ENCODE measurements at regions of chr14 and their contacts with region 1.

Region 1: GRCh38 chr14:89040460-89041259 is 216.2 kb downstream of the TTC8 start:
- DNase-seq: peak; percentile 85 to 93 (median 90)
- ATAC-seq: peak; percentile 90 to 98 (median 96)
- H3K4me3 ChIP-seq: peak overlapping the region; percentile 5 to 63 (median 50)
- H3K27ac ChIP-seq: peak overlapping the region; percentile 51 to 88 (median 72)
- H3K4me1 ChIP-seq: peaks cover 0 to 17% (median 8%) of the 10 kb centered on the region in 12 donors
- H3K27me3 ChIP-seq: no peaks in the 10 kb centered on the region
- CTCF ChIP-seq: peak; percentile 91 to 98 (median 96)
- POLR2A ChIP-seq: no peak

Region 2: DNA sequence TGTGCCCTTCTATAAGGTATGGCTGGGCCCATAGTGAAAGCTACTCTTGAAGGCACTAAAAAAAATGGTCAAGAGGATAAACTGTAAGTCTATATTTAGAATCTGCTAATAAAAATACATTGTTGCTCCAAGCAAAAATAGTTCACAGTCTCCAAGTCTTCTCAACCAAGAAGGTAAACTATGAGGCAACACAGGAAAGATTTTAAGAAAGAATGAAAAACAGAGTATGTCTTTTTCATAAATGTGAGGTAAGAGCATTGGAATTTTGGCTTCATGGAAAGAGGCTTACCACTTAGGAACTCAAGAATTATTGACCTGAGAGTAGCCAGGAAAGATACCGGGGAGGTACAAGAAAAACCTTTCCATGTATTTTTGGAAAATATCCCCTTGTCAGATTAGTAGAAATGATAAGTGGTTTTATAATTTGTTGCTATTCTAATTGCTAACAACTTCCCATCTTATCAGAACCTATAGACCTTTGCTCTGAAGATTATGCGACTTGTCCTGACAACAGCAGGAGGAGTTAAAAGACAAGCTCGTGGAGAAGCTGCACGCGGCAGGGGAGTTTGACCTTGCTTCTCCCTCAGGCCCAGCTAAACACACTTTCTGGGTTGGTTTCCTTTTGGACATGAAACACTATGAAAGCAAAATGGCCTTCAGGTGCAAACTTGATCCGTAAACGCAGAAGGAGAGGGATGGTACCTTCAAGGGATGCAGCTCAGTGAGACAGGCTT is 138.3 kb after region 1 on chr14:
- intact Hi-C with region 1: loop called in 3 of 10 experiments (anchors 5 to 10 kb)
- DNase-seq: no peak
- ATAC-seq: no peak
- H3K4me3 ChIP-seq: no peak overlapping the region
- H3K27ac ChIP-seq: peak overlapping the region in 2 of 12 donors; percentile 19 to 38
- H3K4me1 ChIP-seq: peaks cover 0 to 43% (median 27%) of the 10 kb centered on the region in 12 donors
- H3K27me3 ChIP-seq: no peaks in the 10 kb centered on the region
- CTCF ChIP-seq: no peak
- POLR2A ChIP-seq: no peak

Region 3: GRCh38 chr14:89237921-89238529 is 197.4 kb after region 1 on chr14:
- intact Hi-C with region 1: loop called in 1 of 10 experiments (anchors 10 kb)
- DNase-seq: no peak
- ATAC-seq: peak in 1 of 4 donors; percentile 14
- H3K4me3 ChIP-seq: no peak overlapping the region
- H3K27ac ChIP-seq: no peak overlapping the region
- H3K4me1 ChIP-seq: peaks cover 2 to 53% (median 23%) of the 10 kb centered on the region in 12 donors
- H3K27me3 ChIP-seq: no peaks in the 10 kb centered on the region
- CTCF ChIP-seq: peak in 11 of 12 donors; percentile 7 to 53 (median 26)
- POLR2A ChIP-seq: no peak

Region 4: GRCh38 chr14:89416002-89416995 is 375.6 kb after region 1 on chr14:
- intact Hi-C with region 1: loop called in 8 of 10 experiments (anchors 2 to 10 kb)
- DNase-seq: peak; percentile 97 to 100 (median 99)
- ATAC-seq: peak; percentile 85 to 92 (median 88)
- H3K4me3 ChIP-seq: peak overlapping the region; percentile 66 to 98 (median 94)
- H3K27ac ChIP-seq: peak overlapping the region; percentile 80 to 99 (median 94)
- H3K4me1 ChIP-seq: peaks cover 0 to 44% (median 30%) of the 10 kb centered on the region in 12 donors
- H3K27me3 ChIP-seq: no peaks in the 10 kb centered on the region
- CTCF ChIP-seq: no peak
- POLR2A ChIP-seq: peak in 1 of 2 donors; percentile 56

Region 5: DNA sequence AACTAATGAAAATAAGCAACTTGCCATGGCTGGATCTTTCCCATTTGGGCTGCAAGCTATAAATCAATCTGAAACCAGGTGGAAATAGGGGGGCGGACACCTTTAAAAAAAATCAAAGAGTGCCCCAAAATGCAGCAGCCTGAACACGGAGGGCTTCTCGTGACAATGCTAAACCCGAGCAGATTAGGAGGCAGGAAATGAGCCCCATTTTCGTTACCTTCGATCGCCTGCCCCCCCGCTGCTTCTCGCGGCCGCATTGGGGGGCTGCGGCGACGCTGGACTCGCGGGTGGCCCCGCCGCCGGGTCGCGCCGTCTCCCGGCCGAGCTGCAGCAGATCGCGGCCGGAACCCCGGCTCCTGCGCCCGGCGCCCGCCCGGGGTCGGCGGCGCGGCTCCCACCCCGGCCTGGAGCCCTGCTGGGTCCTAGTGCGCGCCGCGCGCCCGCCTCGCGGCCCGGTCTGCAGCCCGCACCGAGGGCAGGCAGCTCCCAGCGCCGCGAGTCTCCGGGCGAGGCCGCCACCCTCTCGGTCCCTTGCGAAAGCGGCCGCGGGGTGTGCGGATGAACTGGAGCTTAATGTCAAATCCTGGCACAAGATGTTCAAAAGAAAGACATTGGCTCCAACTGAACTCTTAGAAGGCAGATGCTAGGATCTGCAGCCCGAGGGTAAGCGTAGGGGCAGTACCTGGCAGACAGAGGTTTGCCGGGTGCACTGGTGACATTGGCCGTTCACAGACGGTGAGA is 578.3 kb after region 1 on chr14:
- intact Hi-C with region 1: loop called in 3 of 10 experiments (anchors 5 kb)
- DNase-seq: peak; percentile 72 to 90 (median 78)
- ATAC-seq: peak; percentile 81 to 97 (median 89)
- H3K4me3 ChIP-seq: peak overlapping the region; percentile 55 to 91 (median 80)
- H3K27ac ChIP-seq: peak overlapping the region; percentile 52 to 87 (median 82)
- H3K4me1 ChIP-seq: peaks cover 0 to 62% (median 33%) of the 10 kb centered on the region in 12 donors
- H3K27me3 ChIP-seq: no peaks in the 10 kb centered on the region
- CTCF ChIP-seq: peak in 2 of 12 donors; percentile 11 to 16
- POLR2A ChIP-seq: peak in 1 of 2 donors; percentile 51

Region 6: GRCh38 chr14:89767861-89768268 is 727.2 kb after region 1 on chr14:
- intact Hi-C with region 1: loop called in 9 of 10 experiments (anchors 2 to 10 kb)
- DNase-seq: peak in 1 of 5 donors; percentile 20
- ATAC-seq: peak; percentile 61 to 71 (median 62)
- H3K4me3 ChIP-seq: no peak overlapping the region
- H3K27ac ChIP-seq: no peak overlapping the region
- H3K4me1 ChIP-seq: peaks cover 0 to 11% (median 0%) of the 10 kb centered on the region in 12 donors
- H3K27me3 ChIP-seq: no peaks in the 10 kb centered on the region
- CTCF ChIP-seq: peak; percentile 47 to 71 (median 60)
- POLR2A ChIP-seq: no peak

Region 7: DNA sequence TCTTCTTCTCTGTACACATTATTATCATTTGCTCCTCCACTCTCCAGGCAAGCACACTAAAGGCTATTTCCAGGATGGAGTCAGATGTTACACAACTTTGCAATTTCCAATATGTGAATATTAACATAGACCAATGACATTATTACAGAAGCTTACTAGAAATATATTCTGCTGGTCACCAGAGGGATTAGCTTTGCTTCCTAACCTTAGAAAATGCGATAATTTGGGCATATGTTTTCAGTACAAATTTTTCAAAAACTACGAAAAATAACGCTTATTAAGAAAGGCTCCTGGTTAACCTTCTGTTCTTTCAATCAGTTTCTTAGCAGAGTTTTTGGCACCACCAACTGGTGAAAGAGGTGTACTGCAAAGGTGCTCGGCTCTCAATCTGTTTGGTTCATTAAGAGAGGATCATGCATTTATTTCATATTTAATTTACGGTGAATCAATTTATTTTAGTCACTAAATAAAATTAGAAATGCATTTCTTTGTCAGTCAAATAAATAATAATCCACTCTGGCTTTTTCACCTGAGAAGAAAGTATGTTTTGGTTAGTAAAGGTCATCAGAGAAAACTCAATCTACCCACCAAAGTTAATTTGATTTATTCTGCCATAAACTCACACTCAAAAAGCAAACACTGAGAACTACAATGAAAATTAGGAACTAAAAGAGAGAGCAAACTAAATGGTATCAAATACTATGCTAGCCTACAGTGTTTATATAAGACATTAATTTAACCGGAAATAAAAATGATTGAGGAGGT is 874.6 kb after region 1 on chr14:
- intact Hi-C with region 1: loop called in 9 of 10 experiments (anchors 1 to 5 kb)
- DNase-seq: peak in 3 of 5 donors; percentile 33 to 50 (median 47)
- ATAC-seq: peak in 2 of 4 donors; percentile 61 to 80
- H3K4me3 ChIP-seq: no peak overlapping the region
- H3K27ac ChIP-seq: no peak overlapping the region
- H3K4me1 ChIP-seq: peaks cover 0 to 12% (median 0%) of the 10 kb centered on the region in 12 donors
- H3K27me3 ChIP-seq: no peaks in the 10 kb centered on the region
- CTCF ChIP-seq: peak; percentile 83 to 98 (median 96)
- POLR2A ChIP-seq: no peak

Measured in heart left ventricle (tissue), 16 donors.